Right cardiac atrium (tissue), 5 donors: ENCODE measurements at regions of chr7 and their contacts with region 1.

Region 1: GRCh38 chr7:16564909-16565426 is 38.3 kb downstream of the LRRC72 start:
- DNase-seq: no peak
- ATAC-seq: peak; percentile 48 to 51
- H3K4me3 ChIP-seq: no peak overlapping the region
- H3K27ac ChIP-seq: no peak overlapping the region
- H3K4me1 ChIP-seq: no peaks in the 10 kb centered on the region
- H3K27me3 ChIP-seq: no peaks in the 10 kb centered on the region

Region 2: DNA sequence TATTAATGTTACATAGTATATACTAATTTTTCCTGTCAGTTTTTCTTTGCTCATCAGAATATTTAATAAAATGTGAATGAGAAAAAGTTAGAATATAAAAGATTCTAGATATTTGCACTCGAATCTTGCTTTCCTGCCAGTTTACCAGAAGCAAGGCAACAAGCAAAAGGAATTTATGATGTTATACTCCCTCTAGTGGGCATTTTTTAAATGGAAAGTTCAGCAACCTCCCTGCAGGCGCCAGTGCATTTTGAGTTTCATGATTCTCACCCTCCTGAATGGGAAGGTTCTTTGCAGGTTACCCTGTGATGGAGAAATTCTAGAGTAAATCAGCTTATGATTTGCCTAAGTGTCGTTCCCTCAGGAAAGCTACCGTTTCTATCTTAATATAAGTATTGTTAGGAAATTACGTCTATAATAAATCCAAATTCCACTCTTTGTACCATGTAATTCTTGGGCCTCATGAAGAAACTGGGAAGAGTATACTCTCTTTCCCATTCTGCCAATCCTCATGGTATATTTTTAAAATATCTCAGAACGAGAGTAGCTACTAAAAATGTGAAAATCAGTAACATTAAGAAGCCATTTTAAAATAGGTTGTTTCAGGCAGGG is 493.6 kb before region 1 on chr7:
- intact Hi-C with region 1: loop called (anchors 5 to 10 kb)
- DNase-seq: peak in 1 of 3 donors; percentile 48
- ATAC-seq: peak in 1 of 2 donors; percentile 58
- H3K4me3 ChIP-seq: no peak overlapping the region
- H3K27ac ChIP-seq: no peak overlapping the region
- H3K4me1 ChIP-seq: no peaks in the 10 kb centered on the region
- H3K27me3 ChIP-seq: no peaks in the 10 kb centered on the region

Region 3: DNA sequence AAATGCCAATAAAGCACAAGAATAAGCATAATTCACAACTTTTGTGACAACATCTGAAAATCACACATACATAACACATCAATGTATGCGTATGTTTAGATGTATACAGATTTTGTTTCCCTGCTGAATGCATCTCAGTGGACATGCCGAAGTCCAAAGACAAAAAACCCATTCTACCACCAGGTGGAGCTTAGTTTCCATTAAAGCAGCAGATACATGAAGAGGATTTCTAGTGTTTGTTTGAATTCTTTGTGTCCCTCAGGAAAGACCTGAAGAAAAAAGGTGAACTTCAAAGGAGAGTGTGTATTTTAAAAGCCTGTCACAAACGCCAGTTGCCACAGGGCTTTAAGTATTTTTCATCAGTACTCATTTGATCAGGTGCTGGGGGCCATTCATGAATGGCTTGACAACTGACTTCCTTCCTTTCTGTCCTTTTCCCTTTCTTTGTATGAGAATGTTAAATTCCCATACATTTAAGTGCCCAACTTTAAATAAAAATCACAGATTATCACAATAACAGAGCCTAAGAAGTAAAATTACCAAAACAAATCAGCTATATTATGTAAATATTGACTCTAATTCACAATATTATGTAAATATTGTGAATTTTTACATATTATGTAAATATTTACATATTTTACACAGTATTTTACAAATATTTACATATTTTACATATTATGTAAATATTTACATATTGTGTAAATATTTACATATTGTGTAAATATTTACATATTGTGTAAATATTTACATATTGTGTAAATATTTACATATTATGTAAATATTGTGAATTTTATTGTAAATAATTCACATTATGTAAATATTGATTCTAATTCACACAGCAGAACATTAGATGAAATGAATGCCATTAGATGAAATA is 486.7 kb before region 1 on chr7:
- intact Hi-C with region 1: loop called (anchors 5 to 10 kb)
- DNase-seq: no peak
- ATAC-seq: peak; percentile 46 to 54
- H3K4me3 ChIP-seq: no peak overlapping the region
- H3K27ac ChIP-seq: no peak overlapping the region
- H3K4me1 ChIP-seq: no peaks in the 10 kb centered on the region
- H3K27me3 ChIP-seq: no peaks in the 10 kb centered on the region

Region 4: DNA sequence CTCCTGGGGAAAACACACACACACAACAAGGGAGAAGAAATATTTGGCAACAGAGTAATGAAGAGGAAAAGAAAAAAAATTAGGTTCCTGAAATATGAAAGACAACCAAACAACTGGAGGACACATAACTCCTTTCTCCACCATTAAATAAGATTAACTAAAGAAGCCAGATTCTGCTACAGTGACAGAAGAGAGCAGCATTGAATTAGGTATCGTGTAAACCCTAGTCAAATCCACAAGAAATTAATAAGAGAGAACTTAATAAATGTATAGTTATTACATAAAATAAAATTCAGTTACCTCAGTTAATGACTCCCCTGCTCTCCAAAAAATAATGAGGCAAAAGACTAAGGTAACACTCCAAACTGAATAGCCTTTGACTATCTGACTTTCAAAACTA is 450.3 kb before region 1 on chr7:
- intact Hi-C with region 1: loop called in 3 of 4 experiments (anchors 10 kb)
- DNase-seq: no peak
- ATAC-seq: no peak
- H3K4me3 ChIP-seq: no peak overlapping the region
- H3K27ac ChIP-seq: no peak overlapping the region
- H3K4me1 ChIP-seq: no peaks in the 10 kb centered on the region
- H3K27me3 ChIP-seq: no peaks in the 10 kb centered on the region

Region 5: GRCh38 chr7:16431646-16432424 is 133.1 kb before region 1 on chr7:
- intact Hi-C with region 1: loop called in 3 of 4 experiments (anchors 5 to 10 kb)
- DNase-seq: no peak
- ATAC-seq: peak; percentile 62 to 64
- H3K4me3 ChIP-seq: no peak overlapping the region
- H3K27ac ChIP-seq: no peak overlapping the region
- H3K4me1 ChIP-seq: no peaks in the 10 kb centered on the region
- H3K27me3 ChIP-seq: no peaks in the 10 kb centered on the region

Region 6: GRCh38 chr7:16509829-16510228 is 55.1 kb before region 1 on chr7:
- intact Hi-C with region 1: no loop called
- DNase-seq: no peak
- ATAC-seq: no peak
- H3K4me3 ChIP-seq: no peak overlapping the region
- H3K27ac ChIP-seq: no peak overlapping the region
- H3K4me1 ChIP-seq: no peaks in the 10 kb centered on the region
- H3K27me3 ChIP-seq: no peaks in the 10 kb centered on the region